ENCODE measurements at regions of chr9 and their contacts with region 1.

Region 1: GRCh38 chr9:17810728-17811571 is 232.1 kb downstream of the SH3GL2 start:
- DNase-seq: peak; percentile 15
- ATAC-seq: no peak
- H3K4me3 ChIP-seq: no peak overlapping the region
- H3K27ac ChIP-seq: no peak overlapping the region
- H3K4me1 ChIP-seq: no peaks in the 10 kb centered on the region
- H3K27me3 ChIP-seq: no peaks in the 10 kb centered on the region
- CTCF ChIP-seq: peak; percentile 36 to 79 (median 71); a peak in 5 of 6 replicates
- POLR2A ChIP-seq: no peak
- RAD21 ChIP-seq: peak; percentile 64

Region 2: GRCh38 chr9:18208154-18209059 is 397.5 kb after region 1 on chr9:
- CTCF ChIA-PET with region 1: interaction called, 12 read pairs
- POLR2A ChIA-PET with region 1: no interaction called
- RAD21 ChIA-PET with region 1: interaction called in 1 of 2 experiments, 4 read pairs
- intact Hi-C with region 1: loop called (anchors 1 kb)
- DNase-seq: no peak
- ATAC-seq: no peak
- H3K4me3 ChIP-seq: no peak overlapping the region
- H3K27ac ChIP-seq: no peak overlapping the region
- H3K4me1 ChIP-seq: no peaks in the 10 kb centered on the region
- H3K27me3 ChIP-seq: no peaks in the 10 kb centered on the region
- CTCF ChIP-seq: peak in 2 of 3 experiments; percentile 6 to 31; a peak in 2 of 6 replicates
- POLR2A ChIP-seq: no peak
- RAD21 ChIP-seq: peak; percentile 19; the same call in 1 of the 2 replicates

Region 3: DNA sequence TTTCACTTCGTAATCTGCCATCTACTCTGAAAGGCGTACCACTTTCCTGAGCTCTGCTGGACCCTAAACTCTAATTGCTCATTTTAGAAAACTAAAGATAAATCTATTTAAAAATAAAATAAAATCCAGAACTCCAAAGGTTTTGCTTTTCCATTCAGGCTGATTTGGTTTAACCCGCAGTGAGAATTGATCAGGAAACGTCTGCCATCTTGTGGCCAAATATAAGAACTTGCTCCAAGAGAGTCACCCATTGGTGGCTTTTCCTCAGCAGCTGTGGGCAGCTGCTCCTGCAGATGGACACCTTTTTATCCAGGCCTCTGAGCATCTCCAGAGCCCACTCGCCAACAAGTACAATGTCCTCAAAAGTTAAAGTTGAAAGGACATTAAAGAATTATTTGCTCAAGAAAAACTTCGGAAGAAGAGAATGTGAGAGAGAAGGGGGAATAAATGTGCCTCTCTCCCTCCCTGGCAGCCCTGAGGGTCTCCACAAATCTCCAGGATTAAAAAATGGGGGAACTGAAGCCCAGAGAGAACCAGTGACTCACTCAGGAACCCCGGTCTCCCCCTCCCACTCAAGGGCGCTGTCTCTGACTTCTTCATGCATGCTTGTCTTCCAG is 1218.0 kb after region 1 on chr9:
- CTCF ChIA-PET with region 1: interaction called, 8 read pairs
- POLR2A ChIA-PET with region 1: no interaction called
- RAD21 ChIA-PET with region 1: no interaction called
- intact Hi-C with region 1: loop called (anchors 2 kb)
- DNase-seq: peak; percentile 52
- ATAC-seq: peak; percentile 92
- H3K4me3 ChIP-seq: no peak overlapping the region
- H3K27ac ChIP-seq: no peak overlapping the region
- H3K4me1 ChIP-seq: no peaks in the 10 kb centered on the region
- H3K27me3 ChIP-seq: no peaks in the 10 kb centered on the region
- CTCF ChIP-seq: peak; percentile 55 to 64 (median 61); a peak in 5 of 6 replicates
- POLR2A ChIP-seq: no peak
- RAD21 ChIP-seq: peak; percentile 72

Measured in HCT116 (cell line).